ENCODE measurements at regions of chr13 and their contacts with region 1.

Region 1: GRCh38 chr13:30114571-30115256 is 192.6 kb downstream of the KATNAL1 start:
- DNase-seq: peak; percentile 80 to 99
- H3K4me3 ChIP-seq: peak overlapping the region; percentile 42 to 58 (median 54)
- H3K27ac ChIP-seq: 0 out of 2 replicates have a peak overlapping the region, but pooled peaks have one; percentile 25
- H3K4me1 ChIP-seq: peaks cover 0 to 13% (median 1%) of the 10 kb centered on the region in 4 experiments; a peak in 3 of 7 replicates
- H3K27me3 ChIP-seq: peaks cover 0 to 9% (median 3%) of the 10 kb centered on the region in 4 experiments; a peak in 4 of 7 replicates
- CTCF ChIP-seq: peak; percentile 71 to 94 (median 88)
- EP300 ChIP-seq: no peak
- POLR2A ChIP-seq: peak in 1 of 2 experiments; percentile 73; a peak in 2 of 3 replicates
- RAD21 ChIP-seq: peak; percentile 83 to 91

Region 2: DNA sequence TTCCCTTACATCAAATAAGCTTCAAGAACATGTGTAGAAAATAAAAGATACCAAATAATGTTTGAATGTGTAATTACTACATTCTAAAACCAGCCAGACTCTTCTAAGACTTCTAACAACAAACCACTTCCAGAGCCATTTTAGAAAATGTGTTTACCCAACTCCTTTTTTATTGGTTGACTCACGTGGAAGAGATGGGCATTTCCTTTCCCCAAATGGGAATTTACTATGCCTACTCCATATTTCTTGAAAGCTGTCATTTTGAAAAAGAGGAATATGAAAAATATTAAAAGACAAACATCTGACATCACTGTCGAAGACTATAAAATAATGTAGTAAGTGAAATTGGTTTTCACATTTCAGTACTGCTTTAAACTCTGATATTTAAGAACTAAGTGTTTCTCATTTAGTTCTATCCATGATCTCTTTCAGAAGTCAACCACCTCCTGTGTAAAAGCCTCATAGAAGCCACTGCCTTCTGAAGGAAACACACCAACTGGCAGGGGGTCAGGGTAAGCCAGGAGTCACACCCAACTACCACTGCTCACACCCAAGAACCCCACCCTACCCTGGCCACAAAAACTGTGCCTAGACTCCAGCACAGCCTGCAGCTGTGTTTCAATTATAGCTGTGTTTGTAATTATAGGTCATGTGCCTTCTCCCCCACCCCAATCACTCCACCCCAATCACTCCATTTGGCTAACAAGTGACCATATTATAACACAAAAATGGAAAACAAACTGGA is 351.1 kb before region 1 on chr13:
- CTCF ChIA-PET with region 1: interaction called, 44 read pairs
- POLR2A ChIA-PET with region 1: no interaction called
- DNase-seq: no peak
- H3K4me3 ChIP-seq: no peak overlapping the region
- H3K27ac ChIP-seq: no peak overlapping the region
- H3K4me1 ChIP-seq: no peaks in the 10 kb centered on the region
- H3K27me3 ChIP-seq: no peaks in the 10 kb centered on the region
- CTCF ChIP-seq: no peak
- EP300 ChIP-seq: no peak
- POLR2A ChIP-seq: no peak
- RAD21 ChIP-seq: no peak

Region 3: GRCh38 chr13:29835280-29836061 is 279.2 kb before region 1 on chr13:
- CTCF ChIA-PET with region 1: interaction called, 13 read pairs
- POLR2A ChIA-PET with region 1: no interaction called
- DNase-seq: no peak
- H3K4me3 ChIP-seq: no peak overlapping the region
- H3K27ac ChIP-seq: no peak overlapping the region
- H3K4me1 ChIP-seq: peaks cover 0 to 7% (median 4%) of the 10 kb centered on the region in 4 experiments; a peak in 4 of 7 replicates
- H3K27me3 ChIP-seq: peaks cover 0 to 1% (median 0%) of the 10 kb centered on the region in 4 experiments; a peak in 1 of 7 replicates
- CTCF ChIP-seq: peak; percentile 11 to 31 (median 11); a peak in 2 of 4 replicates
- EP300 ChIP-seq: no peak
- POLR2A ChIP-seq: no peak
- RAD21 ChIP-seq: peak in 1 of 2 experiments; percentile 37; a peak in 1 of 4 replicates

Region 4: GRCh38 chr13:29935309-29935981 is 179.3 kb before region 1 on chr13:
- CTCF ChIA-PET with region 1: interaction called, 13 read pairs
- POLR2A ChIA-PET with region 1: no interaction called
- DNase-seq: no peak
- H3K4me3 ChIP-seq: no peak overlapping the region
- H3K27ac ChIP-seq: no peak overlapping the region
- H3K4me1 ChIP-seq: peaks cover 2 to 20% (median 10%) of the 10 kb centered on the region in 4 experiments; a peak in 6 of 7 replicates
- H3K27me3 ChIP-seq: peaks cover 0 to 9% (median 6%) of the 10 kb centered on the region in 4 experiments; a peak in 3 of 7 replicates
- CTCF ChIP-seq: no peak
- EP300 ChIP-seq: no peak
- POLR2A ChIP-seq: no peak
- RAD21 ChIP-seq: no peak

Region 5: DNA sequence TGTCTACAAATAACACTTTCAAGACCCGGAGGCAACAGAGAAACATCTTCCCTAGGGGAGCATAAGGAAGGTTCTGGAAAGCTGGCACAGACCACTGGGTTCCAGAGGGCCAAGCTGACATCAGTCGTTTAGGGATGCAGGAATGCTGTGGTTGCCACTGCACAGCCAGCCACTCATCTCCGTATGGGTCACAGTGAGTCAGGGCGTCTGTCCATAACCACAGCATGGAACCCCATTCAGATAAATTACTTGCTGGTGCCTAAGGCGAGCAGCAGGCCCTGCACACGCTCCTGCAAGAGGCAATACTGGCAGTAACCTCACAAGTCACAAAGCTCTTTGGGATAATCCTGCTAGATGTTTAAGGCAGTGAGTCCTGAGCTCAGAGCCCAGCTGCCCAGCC is 123.4 kb before region 1 on chr13:
- CTCF ChIA-PET with region 1: interaction called, 44 read pairs
- POLR2A ChIA-PET with region 1: no interaction called
- DNase-seq: no peak
- H3K4me3 ChIP-seq: no peak overlapping the region
- H3K27ac ChIP-seq: no peak overlapping the region
- H3K4me1 ChIP-seq: no peaks in the 10 kb centered on the region; a peak in 1 of 7 replicates
- H3K27me3 ChIP-seq: 0 out of 7 replicates have a peak, but pooled peaks cover 0 to 1% (median 0%) of the 10 kb centered on the region in 4 experiments
- CTCF ChIP-seq: no peak
- EP300 ChIP-seq: no peak
- POLR2A ChIP-seq: no peak
- RAD21 ChIP-seq: no peak

Region 6: GRCh38 chr13:30132623-30133553 is 18.2 kb after region 1 on chr13:
- CTCF ChIA-PET with region 1: interaction called, 38 read pairs
- POLR2A ChIA-PET with region 1: no interaction called
- DNase-seq: peak; percentile 93 to 100
- H3K4me3 ChIP-seq: no peak overlapping the region
- H3K27ac ChIP-seq: no peak overlapping the region
- H3K4me1 ChIP-seq: peaks cover 0 to 2% (median 0%) of the 10 kb centered on the region in 4 experiments; a peak in 1 of 7 replicates
- H3K27me3 ChIP-seq: 0 out of 7 replicates have a peak, but pooled peaks cover 0 to 3% (median 0%) of the 10 kb centered on the region in 4 experiments
- CTCF ChIP-seq: peak; percentile 83 to 92 (median 91)
- EP300 ChIP-seq: no peak
- POLR2A ChIP-seq: no peak
- RAD21 ChIP-seq: peak; percentile 96